Activated B cell treated with CpG ODN at 0.5 μM for 24 hours (primary cell): ENCODE measurements at regions of chr5 and their contacts with region 1.

Region 1: GRCh38 chr5:36305571-36306326 is 4.0 kb upstream of the RANBP3L start:
- DNase-seq: no peak
- ATAC-seq: peak; percentile 37
- H3K4me3 Mint-ChIP-seq: no peak overlapping the region
- H3K27ac Mint-ChIP-seq: no peak overlapping the region
- H3K4me1 Mint-ChIP-seq: peaks cover 5% of the 10 kb centered on the region
- H3K27me3 Mint-ChIP-seq: no peaks in the 10 kb centered on the region
- CTCF ChIP-seq: no peak

Region 2: GRCh38 chr5:34464830-34465229 is 1840.9 kb before region 1 on chr5:
- CTCF ChIA-PET with region 1: no interaction called
- POLR2A ChIA-PET with region 1: no interaction called
- intact Hi-C with region 1: no loop called
- DNase-seq: no peak
- ATAC-seq: no peak
- H3K4me3 Mint-ChIP-seq: no peak overlapping the region
- H3K27ac Mint-ChIP-seq: no peak overlapping the region
- H3K4me1 Mint-ChIP-seq: peaks cover 4% of the 10 kb centered on the region
- H3K27me3 Mint-ChIP-seq: no peaks in the 10 kb centered on the region
- CTCF ChIP-seq: no peak

Region 3: GRCh38 chr5:36079200-36079761 is 226.5 kb before region 1 on chr5:
- CTCF ChIA-PET with region 1: interaction called, 6 read pairs
- POLR2A ChIA-PET with region 1: no interaction called
- intact Hi-C with region 1: loop called (anchors 1 kb)
- DNase-seq: no peak
- ATAC-seq: peak; percentile 73
- H3K4me3 Mint-ChIP-seq: no peak overlapping the region
- H3K27ac Mint-ChIP-seq: no peak overlapping the region
- H3K4me1 Mint-ChIP-seq: no peaks in the 10 kb centered on the region
- H3K27me3 Mint-ChIP-seq: peaks cover 16% of the 10 kb centered on the region
- CTCF ChIP-seq: no peak

Region 4: DNA sequence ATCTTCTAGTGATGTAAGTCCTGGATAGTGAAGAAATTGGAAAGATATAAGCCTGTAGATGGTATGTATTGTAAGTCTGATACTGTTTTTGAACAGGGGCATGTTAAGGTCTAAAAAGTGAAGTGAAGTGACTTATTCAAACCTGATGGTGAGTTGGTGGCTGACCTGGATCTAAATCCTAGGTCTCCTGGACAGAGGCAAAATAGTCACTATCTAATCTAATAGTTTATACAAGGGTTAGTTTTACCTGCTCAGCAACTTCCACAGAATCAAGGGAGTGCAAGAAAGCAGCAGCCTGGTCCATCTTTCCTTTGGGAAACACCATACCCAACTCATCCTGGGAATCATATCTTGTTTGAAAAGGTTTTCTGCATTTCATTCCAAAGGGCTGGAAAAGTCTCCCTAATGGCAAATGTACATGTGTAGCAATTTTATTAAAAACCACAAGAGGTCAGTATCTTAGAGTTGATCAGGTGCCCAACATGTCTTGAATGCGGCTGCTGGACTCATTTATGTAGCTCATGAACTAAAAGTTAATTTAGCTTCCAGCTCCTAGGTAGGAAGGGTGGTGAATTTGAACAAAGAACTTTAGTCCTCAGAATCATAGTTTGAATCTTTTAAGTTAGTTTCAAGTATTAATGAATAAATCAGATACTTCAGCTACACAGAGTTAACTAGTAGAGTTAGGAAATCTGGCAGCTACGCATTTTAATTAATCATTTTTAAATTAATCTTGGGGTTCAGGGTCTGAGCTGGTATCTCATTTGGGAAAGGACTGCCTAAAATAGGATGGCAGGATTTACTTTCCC is 127.8 kb before region 1 on chr5:
- CTCF ChIA-PET with region 1: interaction called, 7 read pairs
- POLR2A ChIA-PET with region 1: no interaction called
- intact Hi-C with region 1: loop called (anchors 1 kb)
- DNase-seq: no peak
- ATAC-seq: no peak
- H3K4me3 Mint-ChIP-seq: no peak overlapping the region
- H3K27ac Mint-ChIP-seq: no peak overlapping the region
- H3K4me1 Mint-ChIP-seq: peaks cover 4% of the 10 kb centered on the region
- H3K27me3 Mint-ChIP-seq: no peaks in the 10 kb centered on the region
- CTCF ChIP-seq: no peak

Region 5: GRCh38 chr5:36264202-36264760 is 41.5 kb before region 1 on chr5:
- CTCF ChIA-PET with region 1: interaction called, 5 read pairs
- POLR2A ChIA-PET with region 1: no interaction called
- intact Hi-C with region 1: loop called (anchors 1 kb)
- DNase-seq: no peak
- ATAC-seq: no peak
- H3K4me3 Mint-ChIP-seq: no peak overlapping the region
- H3K27ac Mint-ChIP-seq: no peak overlapping the region
- H3K4me1 Mint-ChIP-seq: no peaks in the 10 kb centered on the region
- H3K27me3 Mint-ChIP-seq: peaks cover 5% of the 10 kb centered on the region
- CTCF ChIP-seq: no peak